ENCODE measurements at regions of chrX and their contacts with region 1.

Region 1: GRCh38 chrX:54044126-54044876 is at the start of gene PHF8:
- DNase-seq: peak; percentile 87
- ATAC-seq: peak; percentile 82
- H3K4me3 Mint-ChIP-seq: peak within 1 kb of the TSS; percentile 92
- H3K27ac Mint-ChIP-seq: peak within 1 kb of the TSS; percentile 96
- H3K4me1 Mint-ChIP-seq: peaks cover 15% of the 10 kb centered on the region
- H3K27me3 Mint-ChIP-seq: no peaks in the 10 kb centered on the region
- CTCF ChIP-seq: no peak
- total RNA-seq, gene PHF8: 56.6 and 58.7 TPM in 2 replicates

Region 2: GRCh38 chrX:53422086-53422860 is 622.0 kb before region 1 on chrX and contains the start of gene SMC1A:
- CTCF ChIA-PET with region 1: no interaction called
- POLR2A ChIA-PET with region 1: interaction called, 5 read pairs
- intact Hi-C with region 1: loop called (anchors 1 kb)
- DNase-seq: peak; percentile 79
- ATAC-seq: peak; percentile 89
- H3K4me3 Mint-ChIP-seq: peak within 1 kb of the TSS; percentile 92
- H3K27ac Mint-ChIP-seq: peak within 1 kb of the TSS; percentile 96
- H3K4me1 Mint-ChIP-seq: peaks cover 29% of the 10 kb centered on the region
- H3K27me3 Mint-ChIP-seq: no peaks in the 10 kb centered on the region
- CTCF ChIP-seq: no peak
- total RNA-seq, gene SMC1A: 75.8 and 84.0 TPM in 2 replicates

Region 3: GRCh38 chrX:54357414-54358377 is 313.4 kb after region 1 on chrX and contains the start of gene WNK3:
- CTCF ChIA-PET with region 1: no interaction called
- POLR2A ChIA-PET with region 1: no interaction called
- intact Hi-C with region 1: loop called (anchors 5 kb)
- DNase-seq: peak; percentile 22
- ATAC-seq: peak; percentile 61
- H3K4me3 Mint-ChIP-seq: peak within 1 kb of the TSS; percentile 85
- H3K27ac Mint-ChIP-seq: peak within 1 kb of the TSS; percentile 59
- H3K4me1 Mint-ChIP-seq: peaks cover 20% of the 10 kb centered on the region
- H3K27me3 Mint-ChIP-seq: peaks cover 10% of the 10 kb centered on the region
- CTCF ChIP-seq: no peak
- total RNA-seq, gene WNK3: 0.40 and 0.46 TPM in 2 replicates

Region 4: DNA sequence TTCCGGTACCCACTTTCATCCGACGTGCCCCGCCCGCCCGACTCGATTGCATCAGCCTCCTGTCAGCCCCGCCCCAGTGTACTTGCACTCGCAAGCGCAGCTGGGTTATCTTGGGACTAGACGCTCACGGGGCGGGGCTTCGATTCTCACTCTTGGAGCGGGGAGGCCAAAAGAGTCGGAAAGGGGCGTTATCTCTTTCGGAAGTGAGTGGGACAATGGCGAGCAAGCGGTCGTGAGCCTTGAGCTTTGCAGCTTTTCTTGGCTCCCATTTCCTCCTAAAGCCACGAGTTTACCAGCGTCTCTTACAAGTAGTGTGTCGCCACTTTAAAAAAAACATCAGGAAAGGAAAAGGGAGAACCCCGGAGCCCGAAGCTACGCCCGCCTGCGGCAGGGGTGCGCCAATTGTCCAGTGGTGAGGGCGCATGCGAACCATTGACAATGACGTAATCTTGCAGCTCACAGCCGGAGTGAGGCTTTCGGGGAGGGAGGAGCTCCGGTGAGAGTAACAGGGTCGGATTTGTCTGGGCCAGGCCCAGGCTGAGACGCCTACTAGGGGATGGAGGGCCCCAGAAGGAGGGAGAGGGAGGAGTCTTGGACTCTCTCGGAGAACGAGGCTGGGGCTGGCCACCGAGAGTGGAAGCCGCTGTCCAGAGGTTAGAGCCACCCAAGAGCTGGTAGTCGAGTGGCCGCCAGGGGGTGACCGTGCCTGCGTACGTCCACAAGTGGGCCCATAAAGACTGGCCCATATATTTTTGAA is 595.2 kb after region 1 on chrX:
- CTCF ChIA-PET with region 1: no interaction called
- POLR2A ChIA-PET with region 1: interaction called, 27 read pairs
- intact Hi-C with region 1: loop called (anchors 1 kb)
- DNase-seq: peak; percentile 76
- ATAC-seq: peak; percentile 88
- H3K4me3 Mint-ChIP-seq: peak overlapping the region; percentile 97
- H3K27ac Mint-ChIP-seq: peak overlapping the region; percentile 100
- H3K4me1 Mint-ChIP-seq: peaks cover 6% of the 10 kb centered on the region
- H3K27me3 Mint-ChIP-seq: no peaks in the 10 kb centered on the region
- CTCF ChIP-seq: no peak

Region 5: DNA sequence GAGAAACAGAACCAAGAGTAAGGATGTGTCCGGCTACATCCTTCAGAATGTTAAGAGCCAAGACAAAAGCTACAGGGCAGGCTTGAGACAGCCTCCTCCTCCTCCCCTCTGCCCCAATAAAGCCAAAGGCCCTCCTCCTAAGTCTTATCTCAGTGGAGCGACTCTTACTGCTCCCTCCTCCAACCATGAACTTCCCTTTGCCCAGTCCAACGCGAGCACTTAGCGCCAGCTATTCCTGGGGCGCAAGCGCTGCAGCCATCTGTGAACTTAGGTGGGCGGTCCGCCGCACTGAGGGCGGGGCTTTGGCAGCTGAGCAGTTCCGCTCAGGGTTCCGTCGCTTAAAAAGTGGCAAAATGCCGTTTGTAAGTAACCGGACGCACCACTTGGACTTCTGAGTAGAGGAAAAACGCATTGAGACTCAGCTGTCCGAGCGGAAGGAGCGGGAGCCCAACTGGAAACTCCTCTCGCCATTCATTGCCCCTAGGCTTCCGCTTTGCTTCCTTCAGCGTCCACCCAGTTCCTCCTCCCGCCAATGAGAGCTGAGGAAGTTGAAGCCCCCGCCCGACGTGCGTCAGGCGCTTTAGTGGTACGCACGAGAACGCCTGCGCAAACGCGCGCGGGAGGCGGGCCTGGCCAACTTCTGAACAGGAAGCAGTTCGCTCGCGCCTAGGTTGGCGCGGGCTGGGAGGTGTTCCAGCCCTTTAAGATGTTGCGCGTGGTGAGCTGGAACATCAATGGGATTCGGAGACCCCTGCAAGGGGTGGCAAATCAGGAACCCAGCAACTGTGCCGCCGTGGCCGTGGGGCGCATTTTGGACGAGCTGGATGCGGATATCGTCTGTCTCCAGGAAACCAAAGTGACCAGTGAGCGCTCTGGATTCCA is 955.7 kb after region 1 on chrX and contains the start of gene APEX2:
- CTCF ChIA-PET with region 1: no interaction called
- POLR2A ChIA-PET with region 1: interaction called, 11 read pairs
- intact Hi-C with region 1: loop called (anchors 1 kb)
- DNase-seq: peak; percentile 74
- ATAC-seq: peak; percentile 95
- H3K4me3 Mint-ChIP-seq: peak within 1 kb of the TSS; percentile 94
- H3K27ac Mint-ChIP-seq: peak within 1 kb of the TSS; percentile 89
- H3K4me1 Mint-ChIP-seq: peaks cover 19% of the 10 kb centered on the region
- H3K27me3 Mint-ChIP-seq: no peaks in the 10 kb centered on the region
- CTCF ChIP-seq: no peak
- total RNA-seq, gene APEX2: 19.6 and 22.2 TPM in 2 replicates

Measured in activated B cell treated with CpG ODN at 0.5 μM for 24 hours (primary cell).